GM13977 (cell line): ENCODE measurements at regions of chr6 and their contacts with region 1.

Region 1: DNA sequence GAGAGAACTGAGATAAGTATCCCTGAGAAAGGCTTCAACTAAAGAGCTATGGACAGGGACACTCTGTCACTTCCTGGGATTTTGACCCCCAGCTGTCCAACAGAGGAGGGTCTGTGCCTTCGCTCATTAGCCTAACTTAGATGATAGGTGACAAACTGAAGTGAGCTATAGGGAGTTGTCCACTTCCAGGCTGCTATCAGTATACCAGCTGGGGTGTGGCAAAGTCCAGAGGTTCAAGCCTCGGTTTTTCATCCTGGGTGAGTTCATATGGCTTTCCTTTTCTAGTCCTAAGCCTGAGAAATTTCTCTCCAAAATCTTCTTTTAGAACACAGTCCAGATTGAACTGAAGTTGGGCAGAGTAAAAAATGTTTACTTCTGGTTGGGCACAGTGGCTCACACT is 5.9 kb upstream of the PAQR8 start:
- DNase-seq: no peak
- CTCF ChIP-seq: no peak

Region 2: DNA sequence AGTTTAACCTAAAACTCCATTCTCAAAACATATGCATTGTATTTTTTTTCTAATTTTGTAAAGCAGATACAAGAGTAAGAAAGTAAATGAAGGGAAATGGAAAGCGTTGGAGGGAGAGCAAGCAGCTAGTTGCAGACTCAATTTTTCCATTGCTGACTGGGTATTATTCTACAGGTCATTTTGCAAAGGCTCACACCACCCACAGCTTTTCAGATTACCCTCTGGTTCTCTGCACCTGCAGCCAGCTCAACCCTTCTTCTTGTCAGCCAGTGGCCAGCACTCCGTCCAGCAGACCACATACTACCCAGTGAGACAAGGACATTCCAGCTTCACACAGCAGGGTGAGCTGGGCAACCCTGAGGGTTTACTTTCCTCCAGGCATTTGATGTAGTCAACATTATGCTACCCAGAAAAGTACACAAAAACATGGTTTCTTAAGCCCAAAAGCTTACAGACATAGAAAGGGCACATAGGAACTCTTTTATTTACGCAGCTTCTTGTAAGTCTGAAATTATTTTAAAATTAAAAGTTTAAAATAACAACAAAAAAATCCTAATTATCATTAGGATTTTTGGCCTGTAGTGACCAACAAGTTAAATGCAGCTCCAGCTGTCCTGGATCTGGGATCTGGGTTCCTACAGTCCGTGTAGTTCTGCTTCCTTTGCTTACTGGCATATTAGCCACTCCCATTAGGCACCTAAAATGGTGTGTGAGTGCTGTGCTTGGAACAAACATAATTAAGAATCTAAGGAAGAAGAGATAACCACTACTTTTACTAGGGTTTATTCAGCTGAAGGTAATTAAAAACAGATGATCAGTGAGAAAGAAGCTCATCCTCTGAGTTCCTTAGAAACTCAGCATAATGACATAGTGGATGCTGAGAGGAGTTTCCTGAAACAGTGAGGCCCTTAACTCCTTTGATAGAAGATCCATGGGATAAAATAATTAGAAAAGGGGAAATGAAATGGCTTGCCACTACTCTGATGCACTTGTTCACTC is 454.0 kb before region 1 on chr6:
- in situ Hi-C with region 1: no loop called
- DNase-seq: no peak
- CTCF ChIP-seq: no peak

Region 3: GRCh38 chr6:52389626-52390360 is 33.8 kb after region 1 on chr6:
- in situ Hi-C with region 1: loop called (anchors 5 kb)
- DNase-seq: peak; percentile 61
- CTCF ChIP-seq: no peak

Region 4: DNA sequence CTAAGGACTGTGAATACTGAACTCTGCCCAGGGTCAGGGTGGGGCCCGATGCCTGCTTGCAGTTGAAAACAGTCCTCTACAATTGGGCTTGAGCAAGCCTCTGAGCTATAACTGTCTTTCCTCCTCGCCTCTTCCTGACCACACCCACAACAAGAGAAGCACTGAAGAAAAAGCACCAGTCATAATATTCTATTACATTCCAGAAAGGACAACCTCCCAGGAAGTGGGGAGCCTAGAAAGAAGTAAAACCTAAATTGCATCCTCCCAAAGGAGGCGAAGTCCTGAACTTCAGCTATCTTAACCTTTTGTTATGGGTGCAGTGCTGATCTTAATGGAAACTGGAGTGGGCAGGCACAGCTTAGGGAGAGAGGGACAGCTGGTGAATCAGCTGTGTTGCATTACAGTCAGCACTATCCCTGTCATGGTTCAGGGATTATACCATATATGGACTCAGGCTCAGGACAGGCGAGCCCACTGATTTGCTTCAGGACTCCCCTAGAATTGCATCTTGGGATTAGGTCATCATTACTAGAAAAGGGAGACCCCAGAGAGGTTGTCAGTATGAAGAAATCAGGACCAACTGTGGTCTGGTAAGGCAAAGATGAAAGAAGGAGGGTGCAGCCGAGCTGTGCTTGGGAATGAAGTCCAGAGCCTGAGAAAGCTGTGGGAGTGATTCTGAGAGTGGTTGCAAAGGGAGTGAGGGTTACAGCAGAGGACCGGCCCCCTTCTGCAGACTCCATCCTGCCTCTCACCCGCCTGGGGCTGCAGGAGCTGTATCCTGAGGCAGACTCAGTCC is 239.2 kb after region 1 on chr6:
- in situ Hi-C with region 1: no loop called
- DNase-seq: peak; percentile 58
- CTCF ChIP-seq: no peak

Region 5: GRCh38 chr6:53151676-53152075 is 795.7 kb after region 1 on chr6:
- in situ Hi-C with region 1: no loop called
- DNase-seq: peak; percentile 29
- CTCF ChIP-seq: peak; percentile 46